Ascending aorta (tissue), 2 donors: ENCODE measurements at regions of chr5 and their contacts with region 1.

Region 1: GRCh38 chr5:157511651-157512644 is 51.9 kb downstream of the NIPAL4 start:
- DNase-seq: peak; percentile 93 to 98
- H3K4me3 ChIP-seq: no peak overlapping the region
- H3K27ac ChIP-seq: peak overlapping the region; percentile 78 to 93
- H3K4me1 ChIP-seq: peaks cover 15 to 33% of the 10 kb centered on the region in 2 donors
- H3K27me3 ChIP-seq: no peaks in the 10 kb centered on the region
- CTCF ChIP-seq: no peak

Region 2: GRCh38 chr5:157563373-157563928 is 51.5 kb after region 1 on chr5:
- intact Hi-C with region 1: loop called (anchors 2 kb)
- DNase-seq: peak in 1 of 2 donors; percentile 84
- H3K4me3 ChIP-seq: peak overlapping the region in 1 of 2 donors; percentile 23
- H3K27ac ChIP-seq: peak overlapping the region; percentile 81 to 83
- H3K4me1 ChIP-seq: peaks cover 6 to 39% of the 10 kb centered on the region in 2 donors
- H3K27me3 ChIP-seq: no peaks in the 10 kb centered on the region
- CTCF ChIP-seq: no peak

Region 3: GRCh38 chr5:157575381-157576020 is 63.6 kb after region 1 on chr5 and contains the start of gene ADAM19:
- intact Hi-C with region 1: loop called (anchors 2 kb)
- DNase-seq: peak in 1 of 2 donors; percentile 79
- H3K4me3 ChIP-seq: peak within 1 kb of the TSS; percentile 72 to 86
- H3K27ac ChIP-seq: peak within 1 kb of the TSS; percentile 71 to 82
- H3K4me1 ChIP-seq: peaks cover 10 to 22% of the 10 kb centered on the region in 2 donors
- H3K27me3 ChIP-seq: no peaks in the 10 kb centered on the region
- CTCF ChIP-seq: peak in 1 of 3 experiments; percentile 12
- total RNA-seq, gene ADAM19: 11.7 TPM

Region 4: DNA sequence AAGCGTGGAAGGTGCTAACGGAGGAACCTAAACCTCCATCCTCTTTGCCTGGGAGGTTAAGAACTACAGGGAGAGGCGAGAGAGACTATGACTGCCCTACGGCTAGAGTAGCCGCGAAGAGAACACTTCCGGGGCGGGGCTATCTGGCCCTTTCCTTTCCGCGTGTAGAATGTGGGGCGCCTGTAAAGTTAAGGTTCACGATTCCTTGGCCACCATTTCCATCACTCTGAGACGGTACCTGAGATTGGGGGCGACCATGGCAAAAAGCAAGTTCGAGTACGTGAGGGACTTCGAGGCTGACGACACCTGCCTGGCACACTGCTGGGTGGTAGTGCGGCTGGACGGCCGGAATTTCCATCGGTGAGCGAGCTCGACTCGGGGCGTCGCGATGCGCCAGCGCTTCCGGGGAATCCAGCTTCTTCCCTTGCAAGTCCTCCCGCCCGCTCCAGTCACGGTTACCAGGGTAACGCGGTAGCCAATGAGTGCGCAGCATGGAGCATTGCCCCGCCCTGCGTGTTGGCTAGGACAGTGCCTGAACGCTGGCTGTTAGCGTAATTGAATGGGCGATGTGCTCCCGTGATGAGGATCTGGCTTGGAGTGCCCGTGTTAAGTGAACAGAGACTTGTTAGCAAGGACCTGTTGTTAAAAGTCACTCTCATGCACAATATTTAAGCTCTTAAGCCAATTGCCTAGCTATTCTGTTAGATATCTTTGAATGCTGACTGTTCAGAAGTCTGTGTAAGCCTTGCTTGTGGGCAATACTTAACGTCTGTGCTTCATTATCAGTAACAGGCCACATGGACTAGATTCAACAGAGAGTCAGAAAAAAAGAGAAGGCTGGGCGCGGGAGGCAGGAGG is 219.6 kb after region 1 on chr5 and contains the start of gene THG1L:
- intact Hi-C with region 1: loop called (anchors 5 kb)
- DNase-seq: peak; percentile 96 to 99
- H3K4me3 ChIP-seq: peak within 1 kb of the TSS; percentile 59 to 76
- H3K27ac ChIP-seq: peak within 1 kb of the TSS; percentile 87
- H3K4me1 ChIP-seq: no peaks in the 10 kb centered on the region
- H3K27me3 ChIP-seq: no peaks in the 10 kb centered on the region
- CTCF ChIP-seq: no peak
- total RNA-seq, gene THG1L: 0.32 TPM